Upper lobe of right lung (tissue), 1 donor: ENCODE measurements at regions of chr2 and their contacts with region 1.

Region 1: DNA sequence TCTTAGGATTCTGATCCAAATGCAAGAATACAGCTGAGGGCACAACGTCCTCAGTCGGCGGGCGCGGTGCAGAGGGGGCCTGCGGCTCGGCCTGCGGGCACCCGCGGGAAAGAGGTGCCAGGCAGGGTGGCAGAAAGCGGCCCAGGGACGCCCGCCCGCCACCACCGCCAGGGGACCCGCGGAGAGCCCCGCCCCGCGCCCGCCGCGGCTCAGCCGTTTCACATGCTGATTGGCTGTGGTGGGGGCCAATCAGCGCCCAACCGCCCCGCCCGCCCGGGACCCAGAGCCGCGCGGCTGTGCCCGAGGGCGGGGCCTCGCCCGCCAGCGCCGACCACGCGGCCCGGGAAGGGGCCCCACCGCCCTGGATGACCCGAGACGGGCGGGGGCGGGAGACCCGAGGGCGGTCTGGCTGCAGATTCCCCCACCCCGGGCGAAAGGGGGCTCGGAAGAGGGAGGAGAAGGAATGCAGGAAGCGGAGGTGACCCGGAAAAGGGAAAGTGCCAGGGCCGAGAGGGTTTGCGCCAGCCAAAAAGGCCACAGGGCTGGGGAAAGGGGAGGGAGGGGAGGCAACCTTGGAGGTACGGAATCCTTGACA is 8.0 kb downstream of the IRS1 start:
- DNase-seq: peak; percentile 97
- ATAC-seq: peak; percentile 99
- H3K4me3 ChIP-seq: peak overlapping the region; percentile 71
- H3K27ac ChIP-seq: peak overlapping the region; percentile 92
- H3K4me1 ChIP-seq: peaks cover 20% of the 10 kb centered on the region
- H3K27me3 ChIP-seq: no peaks in the 10 kb centered on the region
- CTCF ChIP-seq: peak; percentile 42

Region 2: DNA sequence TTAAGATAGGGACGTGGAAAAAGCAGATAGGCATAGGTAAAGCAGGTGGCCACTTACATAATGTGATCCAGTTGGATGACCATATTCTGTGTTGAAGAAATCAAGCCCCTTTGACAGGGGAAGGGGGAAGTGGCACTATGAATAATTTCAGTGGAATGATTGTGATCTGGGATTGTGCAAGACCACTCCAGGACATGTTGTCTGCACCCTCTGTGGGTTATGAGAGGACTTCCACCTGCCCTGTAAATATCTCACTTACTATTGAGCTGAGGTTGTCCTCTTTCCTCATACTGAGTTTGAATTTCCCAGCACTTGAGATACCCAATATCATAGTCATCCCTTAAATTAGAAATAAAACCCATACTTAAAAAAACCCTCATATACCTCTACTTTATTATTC is 212.7 kb before region 1 on chr2:
- intact Hi-C with region 1: no loop called
- DNase-seq: no peak
- ATAC-seq: peak; percentile 81
- H3K4me3 ChIP-seq: no peak overlapping the region
- H3K27ac ChIP-seq: no peak overlapping the region
- H3K4me1 ChIP-seq: peaks cover 4% of the 10 kb centered on the region
- H3K27me3 ChIP-seq: no peaks in the 10 kb centered on the region
- CTCF ChIP-seq: no peak

Region 3: DNA sequence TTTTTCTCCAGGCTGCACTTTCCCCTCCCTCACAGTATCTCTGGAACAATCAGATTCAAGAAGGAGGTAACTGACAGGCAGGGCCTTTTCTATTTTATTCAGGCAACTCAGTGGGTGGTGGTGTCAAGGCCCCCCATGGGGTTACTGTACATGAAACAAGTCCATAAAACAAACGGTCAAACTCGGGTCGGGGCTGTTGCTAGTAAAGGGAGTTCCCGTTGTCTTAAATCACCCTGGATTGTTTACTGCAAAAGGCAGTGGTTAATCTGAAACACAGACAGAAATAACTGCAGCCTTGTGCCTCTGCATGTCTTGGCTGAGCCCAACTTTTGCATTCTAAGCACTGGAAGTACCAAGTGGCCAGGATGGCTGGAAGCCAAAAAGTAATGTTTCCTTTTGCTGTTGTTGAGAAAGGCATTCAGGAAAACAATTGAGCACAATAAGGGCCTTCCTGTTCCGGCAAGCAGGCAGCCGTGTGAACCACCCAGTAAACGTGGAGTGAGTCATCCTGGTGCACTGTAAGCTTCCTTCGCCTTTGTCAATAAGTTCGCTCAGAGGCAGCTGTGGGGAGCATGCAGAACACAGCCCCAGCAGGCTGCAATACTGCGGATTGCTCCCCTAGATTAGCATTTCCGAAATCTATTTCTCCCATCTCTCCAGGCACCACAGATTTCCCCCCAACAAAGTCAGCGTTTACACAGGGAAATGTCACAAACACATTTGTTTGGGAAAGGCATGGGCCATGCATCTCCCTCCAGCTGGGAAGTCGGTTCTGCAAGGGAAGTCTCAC is 141.5 kb before region 1 on chr2:
- intact Hi-C with region 1: loop called (anchors 10 kb)
- DNase-seq: peak; percentile 73
- ATAC-seq: peak; percentile 96
- H3K4me3 ChIP-seq: no peak overlapping the region
- H3K27ac ChIP-seq: peak overlapping the region; percentile 38
- H3K4me1 ChIP-seq: peaks cover 15% of the 10 kb centered on the region
- H3K27me3 ChIP-seq: no peaks in the 10 kb centered on the region
- CTCF ChIP-seq: no peak